Ascending aorta (tissue), 2 donors: ENCODE measurements at regions of chr7 and their contacts with region 1.

Region 1: GRCh38 chr7:55100544-55101301 is 81.9 kb downstream of the EGFR start:
- DNase-seq: peak in 1 of 2 donors; percentile 87
- H3K4me3 ChIP-seq: peak overlapping the region; percentile 12 to 35
- H3K27ac ChIP-seq: peak overlapping the region; percentile 41 to 46
- H3K4me1 ChIP-seq: peaks cover 4 to 27% of the 10 kb centered on the region in 2 donors
- H3K27me3 ChIP-seq: no peaks in the 10 kb centered on the region
- CTCF ChIP-seq: no peak

Region 2: DNA sequence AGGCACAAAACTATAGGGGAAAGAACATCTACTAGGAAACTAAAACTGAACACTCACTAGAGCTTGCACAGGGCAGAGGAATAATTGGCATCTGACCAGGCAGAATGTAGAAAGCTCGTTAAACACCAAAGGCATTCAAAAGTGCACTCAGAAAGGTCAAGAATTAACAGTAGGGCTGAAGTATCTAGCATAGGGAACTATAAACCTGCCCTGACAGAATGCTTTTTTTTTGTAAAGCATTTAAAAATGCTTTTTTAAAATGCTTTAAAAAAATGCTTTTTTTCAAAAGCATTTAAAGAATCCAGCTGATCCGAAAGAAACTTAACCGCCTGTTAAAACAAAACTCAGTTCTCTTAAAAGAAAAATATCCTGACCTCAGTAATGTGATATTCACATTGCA is 156.5 kb before region 1 on chr7:
- intact Hi-C with region 1: no loop called
- DNase-seq: no peak
- H3K4me3 ChIP-seq: no peak overlapping the region
- H3K27ac ChIP-seq: no peak overlapping the region
- H3K4me1 ChIP-seq: peaks cover 0 to 3% of the 10 kb centered on the region in 2 donors
- H3K27me3 ChIP-seq: no peaks in the 10 kb centered on the region
- CTCF ChIP-seq: no peak

Region 3: GRCh38 chr7:54955696-54956420 is 144.9 kb before region 1 on chr7:
- intact Hi-C with region 1: no loop called
- DNase-seq: no peak
- H3K4me3 ChIP-seq: no peak overlapping the region
- H3K27ac ChIP-seq: no peak overlapping the region
- H3K4me1 ChIP-seq: peaks cover 0 to 4% of the 10 kb centered on the region in 2 donors
- H3K27me3 ChIP-seq: no peaks in the 10 kb centered on the region
- CTCF ChIP-seq: no peak

Region 4: DNA sequence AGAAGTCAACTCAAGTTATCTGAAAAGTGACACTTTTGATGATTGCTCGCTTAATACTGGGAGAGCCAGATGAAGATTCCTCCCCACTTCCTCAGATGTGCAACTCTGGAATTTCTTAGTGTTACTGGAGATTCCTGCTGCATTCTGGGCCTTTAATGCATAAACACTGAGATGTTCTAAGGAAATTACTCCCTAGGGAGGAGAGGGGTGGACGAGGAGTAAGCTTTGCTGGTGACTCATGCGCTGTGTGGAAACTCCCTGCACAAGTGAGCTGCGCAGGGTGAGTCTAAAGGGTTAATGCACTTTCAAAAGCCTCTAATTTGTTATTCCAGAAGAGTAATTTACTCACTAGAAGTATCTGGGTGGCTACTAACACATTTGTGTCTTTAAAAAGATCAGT is 35.6 kb before region 1 on chr7:
- intact Hi-C with region 1: loop called (anchors 2 kb)
- DNase-seq: no peak
- H3K4me3 ChIP-seq: peak overlapping the region in 1 of 2 donors; percentile 9
- H3K27ac ChIP-seq: peak overlapping the region; percentile 73 to 77
- H3K4me1 ChIP-seq: peaks cover 4 to 38% of the 10 kb centered on the region in 2 donors
- H3K27me3 ChIP-seq: no peaks in the 10 kb centered on the region
- CTCF ChIP-seq: no peak